ENCODE measurements at regions of chr2 and their contacts with region 1.

Region 1: DNA sequence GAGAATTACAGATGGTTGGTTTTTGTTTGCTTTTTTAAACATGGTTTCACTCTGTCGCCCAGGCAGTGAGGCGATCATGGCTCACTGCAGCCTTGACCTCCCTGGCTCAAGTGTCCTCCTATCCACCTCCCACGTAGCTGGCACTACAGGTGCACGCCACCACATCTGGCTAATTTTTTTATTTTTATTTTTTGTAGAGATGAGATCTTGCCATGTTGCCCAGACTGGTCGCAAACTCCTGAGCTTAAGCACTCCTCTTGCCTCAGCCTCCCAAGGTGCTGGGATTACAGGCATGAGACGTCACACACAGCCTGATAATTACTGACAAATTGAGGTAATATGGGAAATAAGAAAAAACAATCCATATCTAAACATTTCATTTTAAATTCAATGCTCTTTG is 110.5 kb upstream of the ZSWIM2 start:
- DNase-seq: no peak
- ATAC-seq: no peak
- H3K4me3 ChIP-seq: no peak overlapping the region
- H3K27ac ChIP-seq: no peak overlapping the region
- H3K4me1 ChIP-seq: peaks cover 13% of the 10 kb centered on the region
- H3K27me3 ChIP-seq: no peaks in the 10 kb centered on the region
- CTCF ChIP-seq: no peak

Region 2: GRCh38 chr2:186919296-186919695 is 40.2 kb before region 1 on chr2:
- CTCF ChIA-PET with region 1: no interaction called
- POLR2A ChIA-PET with region 1: no interaction called
- intact Hi-C with region 1: loop called (anchors 5 kb)
- DNase-seq: peak; percentile 72
- ATAC-seq: peak; percentile 95
- H3K4me3 ChIP-seq: no peak overlapping the region
- H3K27ac ChIP-seq: no peak overlapping the region
- H3K4me1 ChIP-seq: peaks cover 7% of the 10 kb centered on the region; the same call in 1 of the 2 replicates
- H3K27me3 ChIP-seq: no peaks in the 10 kb centered on the region
- CTCF ChIP-seq: no peak

Measured in PC-3 (cell line).